Endothelial cell of umbilical vein (primary cell): ENCODE measurements at regions of chr4 and their contacts with region 1.

Region 1: DNA sequence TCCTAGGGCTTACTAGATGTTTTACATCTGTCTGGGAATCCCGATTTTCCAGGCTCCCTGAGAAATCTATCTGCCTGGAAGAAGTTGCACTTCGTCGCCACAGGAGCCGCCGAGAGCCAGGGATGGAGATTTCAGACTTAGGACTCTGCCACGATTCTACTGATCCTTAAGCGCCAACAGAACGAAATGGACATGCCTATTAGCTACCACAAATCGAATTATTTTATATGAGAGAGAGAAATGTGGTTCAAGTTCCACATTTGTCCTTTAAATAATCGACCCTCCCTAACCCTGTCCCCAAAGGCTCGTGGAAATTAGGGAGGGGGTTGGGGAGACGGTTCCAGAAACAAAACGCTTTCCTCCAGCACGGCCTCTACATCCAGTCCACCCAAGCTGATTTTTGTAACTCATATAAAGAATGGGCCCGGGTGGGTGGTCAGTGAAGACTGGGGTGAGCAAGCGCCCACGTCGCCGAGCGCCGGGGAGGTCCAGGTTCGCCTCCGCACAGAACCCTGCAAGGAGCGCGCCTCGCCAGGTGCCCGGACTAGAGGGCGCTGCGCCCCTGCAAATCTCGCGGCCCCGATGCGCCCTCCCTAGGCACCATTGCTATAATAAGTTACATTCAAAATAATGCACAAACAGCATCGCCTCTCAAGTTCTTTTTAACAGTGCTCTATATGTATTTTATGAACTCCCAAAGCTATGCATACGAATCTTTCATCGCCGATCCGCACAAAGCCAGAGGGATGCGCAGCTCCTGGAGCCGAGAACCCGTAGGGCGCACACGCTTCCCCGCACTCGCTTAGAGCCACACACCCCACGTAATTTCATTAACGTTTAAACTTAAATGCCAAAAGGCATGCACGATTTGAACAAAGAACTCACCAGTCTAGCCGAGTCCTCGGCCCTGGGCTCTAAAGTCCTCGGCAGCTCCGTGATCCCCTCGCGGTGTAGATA is 2.1 kb upstream of the FAT1 start:
- DNase-seq: peak; percentile 72
- H3K4me3 ChIP-seq: peak overlapping the region in 2 of 3 experiments; percentile 44 to 50
- H3K27ac ChIP-seq: no peak overlapping the region
- H3K4me1 ChIP-seq: peaks cover 32% of the 10 kb centered on the region
- H3K27me3 ChIP-seq: peaks cover 37 to 69% of the 10 kb centered on the region in 2 experiments
- CTCF ChIP-seq: peak; percentile 61 to 83
- POLR2A ChIP-seq: no peak

Region 2: GRCh38 chr4:186845137-186845842 is 119.5 kb after region 1 on chr4:
- CTCF ChIA-PET with region 1: interaction called, 4 read pairs
- POLR2A ChIA-PET with region 1: no interaction called
- dilution Hi-C with region 1: no loop called
- intact Hi-C with region 1: loop called (anchors 1 kb)
- DNase-seq: peak; percentile 95
- H3K4me3 ChIP-seq: peak overlapping the region in 1 of 3 experiments; percentile 34
- H3K27ac ChIP-seq: peak overlapping the region; percentile 95
- H3K4me1 ChIP-seq: peaks cover 31% of the 10 kb centered on the region
- H3K27me3 ChIP-seq: no peaks in the 10 kb centered on the region
- CTCF ChIP-seq: no peak
- POLR2A ChIP-seq: peak; percentile 18

Region 3: DNA sequence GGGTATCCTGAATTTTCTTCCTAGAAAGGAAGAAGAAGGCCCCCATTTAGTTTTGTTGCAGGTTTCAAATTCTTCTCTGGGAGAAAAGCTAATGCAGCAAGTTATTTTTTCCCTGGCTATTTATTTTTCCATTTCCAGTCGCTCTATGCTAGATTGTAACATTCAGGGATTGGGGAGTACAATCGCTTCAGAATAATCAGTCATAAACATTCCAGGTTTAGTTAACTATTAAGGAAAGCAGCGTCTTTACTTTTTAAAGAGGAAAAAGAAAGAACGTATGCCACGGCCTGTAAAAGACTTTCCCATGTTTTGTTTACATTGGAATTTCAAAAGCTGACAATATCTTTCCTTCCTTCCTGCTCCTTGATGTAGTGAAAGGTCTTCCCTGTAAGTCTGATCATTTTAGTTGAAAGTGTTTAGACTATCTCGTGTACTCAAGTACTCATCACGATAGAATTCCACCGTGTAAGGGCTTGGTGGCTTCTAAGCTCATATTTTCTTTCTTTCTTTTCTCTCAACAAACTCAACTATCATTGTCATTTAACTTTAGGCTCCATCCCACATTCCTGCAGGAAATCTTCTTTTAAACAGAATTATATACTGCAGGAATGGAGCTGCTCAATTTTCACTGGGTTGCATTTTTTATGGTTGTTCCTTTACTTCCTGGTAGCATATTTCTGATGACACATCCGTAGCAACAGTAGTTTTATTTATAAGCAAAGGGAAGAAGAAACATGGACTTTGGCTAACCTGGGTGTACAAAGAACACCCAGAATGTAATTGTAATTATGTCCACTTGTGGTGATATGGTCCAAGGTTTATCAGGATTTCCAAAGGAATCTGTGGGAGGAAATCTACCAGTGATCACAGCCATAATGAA is 211.0 kb after region 1 on chr4:
- CTCF ChIA-PET with region 1: interaction called, 4 read pairs
- POLR2A ChIA-PET with region 1: no interaction called
- dilution Hi-C with region 1: no loop called
- intact Hi-C with region 1: loop called (anchors 2 kb)
- DNase-seq: peak; percentile 55
- H3K4me3 ChIP-seq: peak overlapping the region in 1 of 3 experiments; percentile 30
- H3K27ac ChIP-seq: no peak overlapping the region
- H3K4me1 ChIP-seq: no peaks in the 10 kb centered on the region
- H3K27me3 ChIP-seq: no peaks in the 10 kb centered on the region
- CTCF ChIP-seq: no peak
- POLR2A ChIP-seq: no peak

Region 4: GRCh38 chr4:187084701-187085100 is 359.0 kb after region 1 on chr4:
- CTCF ChIA-PET with region 1: no interaction called
- POLR2A ChIA-PET with region 1: no interaction called
- dilution Hi-C with region 1: no loop called
- intact Hi-C with region 1: loop called (anchors 10 kb)
- DNase-seq: no peak
- H3K4me3 ChIP-seq: no peak overlapping the region
- H3K27ac ChIP-seq: no peak overlapping the region
- H3K4me1 ChIP-seq: no peaks in the 10 kb centered on the region
- H3K27me3 ChIP-seq: no peaks in the 10 kb centered on the region
- CTCF ChIP-seq: no peak
- POLR2A ChIP-seq: no peak